Heart left ventricle (tissue), 16 donors: ENCODE measurements at regions of chr1 and their contacts with region 1.

Region 1: DNA sequence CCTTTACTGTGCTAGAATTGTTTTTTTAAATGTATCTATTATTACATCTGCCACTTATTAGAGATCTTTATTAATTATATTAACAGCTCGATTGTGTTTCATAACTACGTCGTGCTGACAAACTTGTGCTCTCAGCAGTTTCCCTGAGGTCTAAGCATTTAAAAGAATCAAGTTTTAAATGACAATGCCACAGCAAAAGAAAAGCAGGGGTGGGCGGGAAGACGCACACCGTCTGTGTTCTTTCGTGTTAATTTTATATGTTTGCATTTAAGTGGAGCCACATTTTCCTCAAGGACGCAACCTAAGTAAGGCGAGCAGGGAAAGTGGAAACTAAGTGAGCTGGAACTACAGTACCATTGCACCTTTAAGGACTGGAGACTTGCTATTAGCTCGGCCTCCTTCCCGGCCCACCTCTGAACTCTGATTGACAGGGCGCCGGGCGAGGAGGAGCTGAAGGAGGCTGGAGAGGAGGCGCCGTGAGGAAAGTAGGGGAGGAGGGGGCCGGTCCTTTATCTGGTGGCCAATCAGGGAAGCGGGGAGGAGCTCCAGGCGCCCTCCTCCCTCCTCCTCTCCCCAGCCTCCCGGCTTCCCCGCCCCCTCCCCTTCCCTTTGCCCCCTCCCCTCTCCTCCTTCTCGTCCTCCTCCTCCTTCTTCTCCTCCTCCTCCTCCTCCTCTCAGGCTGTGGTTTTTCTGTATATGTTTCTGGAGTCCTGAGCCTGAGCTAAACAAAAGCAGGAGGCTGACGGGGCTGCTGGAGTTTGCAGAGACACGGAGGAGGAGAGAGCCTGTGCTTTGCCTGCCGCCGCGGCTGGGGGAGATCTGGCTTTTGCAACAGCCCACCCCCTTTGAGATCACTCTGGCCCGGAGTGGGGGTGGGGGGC is at the start of gene PBX1:
- DNase-seq: peak; percentile 97 to 99 (median 98)
- ATAC-seq: peak; percentile 98 to 100 (median 99)
- H3K4me3 ChIP-seq: peak within 1 kb of the TSS; percentile 58 to 88 (median 73)
- H3K27ac ChIP-seq: peak within 1 kb of the TSS; percentile 58 to 87 (median 84)
- H3K4me1 ChIP-seq: peaks cover 0 to 13% (median 5%) of the 10 kb centered on the region in 12 donors
- H3K27me3 ChIP-seq: peaks cover 0 to 6% (median 0%) of the 10 kb centered on the region in 9 donors
- CTCF ChIP-seq: no peak
- POLR2A ChIP-seq: peak in 1 of 2 donors; percentile 91
- total RNA-seq, gene PBX1: 24.0 to 78.2 (median 59.8) TPM

Region 2: GRCh38 chr1:164417016-164417704 is 141.5 kb before region 1 on chr1:
- intact Hi-C with region 1: no loop called
- DNase-seq: no peak
- ATAC-seq: no peak
- H3K4me3 ChIP-seq: no peak overlapping the region
- H3K27ac ChIP-seq: no peak overlapping the region
- H3K4me1 ChIP-seq: no peaks in the 10 kb centered on the region
- H3K27me3 ChIP-seq: no peaks in the 10 kb centered on the region
- CTCF ChIP-seq: no peak
- POLR2A ChIP-seq: no peak

Region 3: GRCh38 chr1:164440232-164440631 is 118.5 kb before region 1 on chr1:
- intact Hi-C with region 1: loop called in 1 of 10 experiments (anchors 10 kb)
- DNase-seq: peak in 4 of 5 donors; percentile 48 to 64 (median 56)
- ATAC-seq: peak; percentile 97 to 100 (median 100)
- H3K4me3 ChIP-seq: no peak overlapping the region
- H3K27ac ChIP-seq: no peak overlapping the region
- H3K4me1 ChIP-seq: peaks cover 0 to 14% (median 0%) of the 10 kb centered on the region in 12 donors
- H3K27me3 ChIP-seq: no peaks in the 10 kb centered on the region
- CTCF ChIP-seq: peak; percentile 18 to 66 (median 53)
- POLR2A ChIP-seq: no peak

Region 4: GRCh38 chr1:164617377-164618201 is 58.9 kb after region 1 on chr1:
- intact Hi-C with region 1: loop called in 2 of 10 experiments (anchors 5 to 10 kb)
- DNase-seq: no peak
- ATAC-seq: no peak
- H3K4me3 ChIP-seq: no peak overlapping the region
- H3K27ac ChIP-seq: peak overlapping the region in 2 of 12 donors; percentile 35 to 73
- H3K4me1 ChIP-seq: peaks cover 4 to 91% (median 42%) of the 10 kb centered on the region in 12 donors
- H3K27me3 ChIP-seq: no peaks in the 10 kb centered on the region
- CTCF ChIP-seq: peak; percentile 18 to 58 (median 45)
- POLR2A ChIP-seq: no peak

Region 5: GRCh38 chr1:164716992-164717703 is 158.4 kb after region 1 on chr1:
- intact Hi-C with region 1: loop called in 3 of 10 experiments (anchors 5 to 10 kb)
- DNase-seq: no peak
- ATAC-seq: no peak
- H3K4me3 ChIP-seq: no peak overlapping the region
- H3K27ac ChIP-seq: peak overlapping the region in 2 of 12 donors; percentile 3 to 30
- H3K4me1 ChIP-seq: peaks cover 0 to 79% (median 41%) of the 10 kb centered on the region in 12 donors
- H3K27me3 ChIP-seq: no peaks in the 10 kb centered on the region
- CTCF ChIP-seq: no peak
- POLR2A ChIP-seq: no peak

Region 6: DNA sequence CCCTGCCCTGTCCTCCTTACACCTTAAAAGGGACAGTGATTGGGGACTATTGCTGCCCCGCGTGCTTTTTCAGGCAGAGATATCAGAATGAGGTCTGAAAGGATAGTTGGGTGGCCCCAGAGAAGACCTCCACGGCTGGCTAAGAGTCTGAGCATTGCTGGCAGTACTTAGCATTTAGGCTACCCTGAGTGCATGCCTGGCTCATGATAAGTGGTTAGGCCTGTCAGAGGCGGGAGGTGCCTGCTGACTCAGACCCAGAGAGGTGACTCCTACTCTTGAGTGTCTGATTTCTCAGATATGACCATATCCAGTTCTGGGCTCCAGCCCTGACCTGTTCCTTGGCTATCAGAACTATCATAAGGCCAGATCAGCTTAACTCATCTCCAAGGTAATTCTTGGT is 213.9 kb after region 1 on chr1:
- intact Hi-C with region 1: loop called in 2 of 10 experiments (anchors 5 kb)
- DNase-seq: peak in 4 of 5 donors; percentile 46 to 84 (median 66)
- ATAC-seq: peak; percentile 83 to 90 (median 90)
- H3K4me3 ChIP-seq: no peak overlapping the region
- H3K27ac ChIP-seq: peak overlapping the region in 11 of 12 donors; percentile 35 to 79 (median 53)
- H3K4me1 ChIP-seq: peaks cover 0 to 78% (median 43%) of the 10 kb centered on the region in 12 donors
- H3K27me3 ChIP-seq: no peaks in the 10 kb centered on the region
- CTCF ChIP-seq: no peak
- POLR2A ChIP-seq: no peak